ENCODE measurements at regions of chr19 and their contacts with region 1.

Region 1: DNA sequence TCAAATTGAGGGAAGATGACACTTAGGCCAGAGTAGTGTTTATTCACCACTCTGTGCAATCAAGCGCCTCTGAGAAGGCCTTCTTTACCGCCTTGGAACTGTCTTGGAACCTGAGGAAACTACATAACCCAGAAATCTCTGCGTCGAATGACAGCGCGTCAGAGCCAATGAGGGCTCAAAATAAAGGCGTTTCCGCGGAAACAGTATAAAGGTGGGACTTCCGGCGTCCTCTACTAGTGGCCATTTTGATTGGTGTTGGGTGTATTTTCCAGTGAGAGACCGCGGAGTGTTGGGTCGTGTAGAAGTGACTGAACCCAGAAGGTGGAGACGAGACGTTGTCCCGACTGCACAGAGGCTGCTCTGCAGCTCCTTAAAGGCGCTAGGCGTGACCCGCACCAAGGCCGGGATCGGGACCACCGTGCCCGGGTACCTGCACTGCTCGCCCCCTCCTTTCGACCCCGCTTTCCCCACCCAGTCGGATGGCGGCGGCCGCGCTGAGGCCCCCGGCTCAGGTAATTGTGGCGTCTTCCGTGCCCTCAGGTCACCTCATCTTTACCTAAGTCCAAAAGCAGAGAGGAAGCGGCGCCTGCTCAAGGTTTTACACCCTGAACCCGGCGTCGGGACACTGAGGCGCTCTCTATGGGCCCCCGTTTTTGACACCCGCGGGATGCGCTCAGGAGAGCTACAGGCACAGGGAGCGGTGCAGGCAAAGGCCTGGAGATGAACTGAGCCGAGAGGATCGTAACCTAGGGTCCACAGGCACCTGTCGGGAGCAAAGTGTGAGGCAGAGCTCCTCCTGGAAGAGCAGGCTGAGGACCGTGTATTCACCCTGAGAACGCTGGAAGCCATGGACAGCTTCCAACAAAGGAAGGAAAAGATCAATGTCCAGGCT is at the start of gene ZNF776:
- DNase-seq: peak; percentile 82 to 97 (median 88)
- H3K4me3 ChIP-seq: peak within 1 kb of the TSS; percentile 65 to 96 (median 82)
- H3K27ac ChIP-seq: peak within 1 kb of the TSS in 4 of 5 donors; percentile 53 to 91 (median 75)
- H3K4me1 ChIP-seq: peaks cover 7 to 19% of the 10 kb centered on the region in 2 donors
- H3K27me3 ChIP-seq: no peaks in the 10 kb centered on the region
- CTCF ChIP-seq: peak in 2 of 6 experiments; percentile 7
- POLR2A ChIP-seq: peak in 1 of 2 donors; percentile 58
- total RNA-seq, gene ZNF776: 9.9 to 26.3 (median 15.4) TPM

Region 2: GRCh38 chr19:57819475-57820148 is 72.8 kb after region 1 on chr19:
- intact Hi-C with region 1: loop called in 1 of 2 experiments (anchors 10 kb)
- DNase-seq: peak; percentile 87 to 95 (median 91)
- H3K4me3 ChIP-seq: peak overlapping the region; percentile 68 to 93 (median 81)
- H3K27ac ChIP-seq: peak overlapping the region; percentile 45 to 86 (median 61)
- H3K4me1 ChIP-seq: peaks cover 0 to 16% of the 10 kb centered on the region in 2 donors
- H3K27me3 ChIP-seq: no peaks in the 10 kb centered on the region
- CTCF ChIP-seq: no peak
- POLR2A ChIP-seq: peak; percentile 27 to 63

Region 3: GRCh38 chr19:57890412-57891105 is 143.7 kb after region 1 on chr19:
- intact Hi-C with region 1: loop called in 1 of 2 experiments (anchors 10 kb)
- DNase-seq: no peak
- H3K4me3 ChIP-seq: no peak overlapping the region
- H3K27ac ChIP-seq: no peak overlapping the region
- H3K4me1 ChIP-seq: peaks cover 0 to 11% of the 10 kb centered on the region in 2 donors
- H3K27me3 ChIP-seq: no peaks in the 10 kb centered on the region
- CTCF ChIP-seq: no peak
- POLR2A ChIP-seq: no peak